PC-9 (cell line): ENCODE measurements at regions of chrX and their contacts with region 1.

Region 1: DNA sequence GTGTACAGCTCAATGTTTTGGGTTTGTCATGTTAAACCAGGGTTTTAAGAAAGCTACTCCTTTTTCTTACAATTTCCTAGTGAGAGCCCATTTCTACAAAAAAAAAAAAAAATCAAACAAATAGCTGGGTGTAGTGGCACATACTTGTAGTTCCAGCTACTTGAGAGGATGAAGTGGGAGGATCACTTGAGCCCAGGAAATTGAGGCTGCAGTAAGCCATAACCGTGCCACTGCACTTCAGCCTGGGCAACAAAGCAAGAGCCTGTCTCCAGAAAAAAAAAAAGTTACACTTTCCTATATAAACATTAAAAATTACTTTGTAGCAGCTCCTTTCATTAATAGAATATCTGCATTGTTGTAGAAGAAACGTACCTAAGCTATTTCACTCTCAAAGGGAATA is 166.7 kb downstream of the HS6ST2 start:
- DNase-seq: no peak
- H3K4me3 ChIP-seq: no peak overlapping the region
- H3K27ac ChIP-seq: no peak overlapping the region
- H3K4me1 ChIP-seq: no peaks in the 10 kb centered on the region
- H3K27me3 ChIP-seq: no peaks in the 10 kb centered on the region
- CTCF ChIP-seq: no peak

Region 2: GRCh38 chrX:132059973-132060540 is 731.7 kb before region 1 on chrX:
- CTCF ChIA-PET with region 1: no interaction called
- POLR2A ChIA-PET with region 1: no interaction called
- intact Hi-C with region 1: no loop called
- DNase-seq: no peak
- H3K4me3 ChIP-seq: no peak overlapping the region
- H3K27ac ChIP-seq: no peak overlapping the region
- H3K4me1 ChIP-seq: no peaks in the 10 kb centered on the region
- H3K27me3 ChIP-seq: no peaks in the 10 kb centered on the region
- CTCF ChIP-seq: no peak

Region 3: GRCh38 chrX:132520213-132520612 is 271.5 kb before region 1 on chrX:
- CTCF ChIA-PET with region 1: no interaction called
- POLR2A ChIA-PET with region 1: interaction called, 11 read pairs
- intact Hi-C with region 1: no loop called
- DNase-seq: no peak
- H3K4me3 ChIP-seq: no peak overlapping the region
- H3K27ac ChIP-seq: no peak overlapping the region
- H3K4me1 ChIP-seq: no peaks in the 10 kb centered on the region
- H3K27me3 ChIP-seq: no peaks in the 10 kb centered on the region
- CTCF ChIP-seq: no peak

Region 4: GRCh38 chrX:132694331-132694823 is 97.3 kb before region 1 on chrX:
- CTCF ChIA-PET with region 1: no interaction called
- POLR2A ChIA-PET with region 1: no interaction called
- intact Hi-C with region 1: no loop called
- DNase-seq: no peak
- H3K4me3 ChIP-seq: no peak overlapping the region
- H3K27ac ChIP-seq: no peak overlapping the region
- H3K4me1 ChIP-seq: no peaks in the 10 kb centered on the region
- H3K27me3 ChIP-seq: no peaks in the 10 kb centered on the region
- CTCF ChIP-seq: no peak

Region 5: DNA sequence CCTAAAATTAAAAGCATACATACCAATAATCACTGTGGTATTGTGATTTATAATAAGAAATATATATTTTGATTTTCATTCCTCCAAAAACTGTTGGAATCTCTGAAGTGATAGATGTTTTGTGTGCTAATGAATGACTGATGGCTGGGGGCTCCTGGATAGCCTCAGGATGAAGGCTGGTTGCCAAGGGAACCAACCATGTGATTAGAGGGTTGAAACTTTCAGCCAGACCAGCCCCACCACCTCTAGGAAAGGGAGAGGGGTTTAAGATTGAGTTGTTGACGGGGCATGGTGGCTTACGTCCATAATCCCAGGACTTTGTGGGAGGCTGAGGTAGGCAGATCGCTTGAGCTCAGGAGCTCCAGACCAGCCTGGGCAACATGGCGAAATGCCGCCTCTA is 132.7 kb after region 1 on chrX:
- CTCF ChIA-PET with region 1: no interaction called
- POLR2A ChIA-PET with region 1: no interaction called
- intact Hi-C with region 1: no loop called
- DNase-seq: no peak
- H3K4me3 ChIP-seq: no peak overlapping the region
- H3K27ac ChIP-seq: no peak overlapping the region
- H3K4me1 ChIP-seq: no peaks in the 10 kb centered on the region
- H3K27me3 ChIP-seq: no peaks in the 10 kb centered on the region
- CTCF ChIP-seq: no peak